ENCODE measurements at regions of chr10 and their contacts with region 1.

Region 1: GRCh38 chr10:67520924-67521520 is 175.0 kb downstream of the CTNNA3 start:
- DNase-seq: peak; percentile 94
- ATAC-seq: peak; percentile 85
- H3K4me3 ChIP-seq: no peak overlapping the region
- H3K27ac ChIP-seq: no peak overlapping the region
- H3K4me1 ChIP-seq: peaks cover 17% of the 10 kb centered on the region
- H3K27me3 ChIP-seq: peaks cover 18% of the 10 kb centered on the region
- CTCF ChIP-seq: peak; percentile 100

Region 2: GRCh38 chr10:66513504-66513903 is 1007.5 kb before region 1 on chr10:
- CTCF ChIA-PET with region 1: no interaction called
- POLR2A ChIA-PET with region 1: no interaction called
- intact Hi-C with region 1: loop called (anchors 10 kb)
- DNase-seq: no peak
- ATAC-seq: no peak
- H3K4me3 ChIP-seq: no peak overlapping the region
- H3K27ac ChIP-seq: no peak overlapping the region
- H3K4me1 ChIP-seq: peaks cover 20% of the 10 kb centered on the region
- H3K27me3 ChIP-seq: no peaks in the 10 kb centered on the region
- CTCF ChIP-seq: no peak

Region 3: GRCh38 chr10:66931340-66931948 is 589.6 kb before region 1 on chr10:
- CTCF ChIA-PET with region 1: interaction called, 9 read pairs
- POLR2A ChIA-PET with region 1: no interaction called
- intact Hi-C with region 1: loop called (anchors 1 kb)
- DNase-seq: peak; percentile 97
- ATAC-seq: peak; percentile 78
- H3K4me3 ChIP-seq: no peak overlapping the region
- H3K27ac ChIP-seq: no peak overlapping the region
- H3K4me1 ChIP-seq: peaks cover 3% of the 10 kb centered on the region; the same call in 1 of the 2 replicates
- H3K27me3 ChIP-seq: peaks cover 33% of the 10 kb centered on the region
- CTCF ChIP-seq: peak; percentile 100

Region 4: GRCh38 chr10:67476201-67476600 is 44.8 kb before region 1 on chr10:
- CTCF ChIA-PET with region 1: interaction called, 4 read pairs
- POLR2A ChIA-PET with region 1: no interaction called
- intact Hi-C with region 1: loop called (anchors 1 kb)
- DNase-seq: peak; percentile 63
- ATAC-seq: peak; percentile 68
- H3K4me3 ChIP-seq: no peak overlapping the region
- H3K27ac ChIP-seq: no peak overlapping the region
- H3K4me1 ChIP-seq: no peaks in the 10 kb centered on the region
- H3K27me3 ChIP-seq: 0 out of 2 replicates have a peak, but pooled peaks cover 3% of the 10 kb centered on the region
- CTCF ChIP-seq: peak; percentile 79

Region 5: DNA sequence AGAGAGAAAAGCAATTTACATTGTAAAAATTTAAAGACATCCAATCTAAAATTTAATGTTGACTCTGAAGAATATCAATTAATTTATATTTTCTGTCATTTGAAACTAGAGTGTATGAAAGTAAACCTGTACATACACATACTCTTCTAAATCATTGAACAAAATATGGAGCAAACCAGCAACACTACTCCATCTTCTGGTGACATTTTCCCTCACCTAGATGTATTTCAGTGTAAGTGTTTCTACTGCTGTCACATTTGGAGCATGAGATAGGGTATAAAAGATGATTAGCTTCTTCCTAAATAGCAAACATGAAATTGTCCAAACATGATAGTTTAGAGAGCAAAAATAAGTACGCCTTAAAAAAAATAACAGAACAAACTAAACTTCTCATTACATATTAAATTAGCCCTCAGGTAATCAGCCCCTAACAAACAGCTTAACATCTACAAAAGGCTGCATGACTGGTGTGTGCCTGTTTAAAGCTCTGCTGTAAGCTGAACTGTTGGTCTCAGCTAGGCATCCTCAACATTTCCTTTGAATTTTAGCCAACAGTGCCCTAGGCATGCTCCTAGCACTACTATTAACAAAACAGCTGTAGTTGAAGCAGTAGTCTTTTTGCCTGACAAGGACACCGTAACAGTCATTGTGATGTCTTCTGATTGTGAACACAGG is 14.8 kb before region 1 on chr10:
- CTCF ChIA-PET with region 1: interaction called, 7 read pairs
- POLR2A ChIA-PET with region 1: no interaction called
- intact Hi-C with region 1: loop called (anchors 1 kb)
- DNase-seq: peak; percentile 50
- ATAC-seq: peak; percentile 44
- H3K4me3 ChIP-seq: no peak overlapping the region
- H3K27ac ChIP-seq: no peak overlapping the region
- H3K4me1 ChIP-seq: peaks cover 10% of the 10 kb centered on the region
- H3K27me3 ChIP-seq: no peaks in the 10 kb centered on the region
- CTCF ChIP-seq: peak; percentile 52; the same call in 1 of the 2 replicates

Region 6: DNA sequence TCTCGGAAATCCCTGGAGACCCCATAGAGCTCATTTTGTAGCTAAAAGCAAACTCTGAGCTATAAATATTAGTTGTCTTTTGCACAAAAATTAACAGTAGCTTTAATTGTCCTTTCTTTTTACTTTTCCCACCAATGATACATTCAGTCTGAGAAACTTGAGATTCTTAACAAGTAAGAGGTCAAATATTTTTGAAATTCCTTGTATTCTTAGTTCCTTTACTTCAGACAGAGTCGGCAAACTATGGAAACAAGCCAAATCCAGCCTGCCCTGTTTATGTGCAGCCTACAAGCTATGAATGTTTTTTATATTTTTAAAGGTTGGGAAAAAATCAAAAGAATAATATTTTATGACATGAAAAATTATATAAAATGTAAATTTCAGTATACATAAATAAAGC is 28.4 kb after region 1 on chr10:
- CTCF ChIA-PET with region 1: no interaction called
- POLR2A ChIA-PET with region 1: no interaction called
- intact Hi-C with region 1: no loop called
- DNase-seq: no peak
- ATAC-seq: no peak
- H3K4me3 ChIP-seq: no peak overlapping the region
- H3K27ac ChIP-seq: no peak overlapping the region
- H3K4me1 ChIP-seq: no peaks in the 10 kb centered on the region
- H3K27me3 ChIP-seq: peaks cover 79% of the 10 kb centered on the region
- CTCF ChIP-seq: no peak

Region 7: DNA sequence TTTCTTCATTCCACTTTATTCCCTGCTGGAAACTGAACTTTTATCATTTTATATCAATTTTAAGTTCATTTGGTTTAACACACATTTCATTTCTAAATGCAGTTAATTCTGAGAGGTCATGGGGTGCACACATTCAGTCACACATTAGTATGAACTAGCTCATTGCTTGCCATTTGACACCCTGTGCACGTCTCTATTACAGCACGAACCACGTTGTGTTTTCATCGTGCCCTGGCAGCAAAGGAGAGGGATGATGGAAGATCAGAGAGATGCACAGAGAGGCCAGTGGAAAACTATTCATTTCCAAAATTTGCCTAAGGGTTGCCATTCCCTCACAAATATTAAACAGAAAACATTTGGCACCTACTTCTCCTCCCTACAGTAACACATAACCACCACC is 129.5 kb after region 1 on chr10:
- CTCF ChIA-PET with region 1: no interaction called
- POLR2A ChIA-PET with region 1: no interaction called
- intact Hi-C with region 1: no loop called
- DNase-seq: no peak
- ATAC-seq: no peak
- H3K4me3 ChIP-seq: no peak overlapping the region
- H3K27ac ChIP-seq: no peak overlapping the region
- H3K4me1 ChIP-seq: no peaks in the 10 kb centered on the region
- H3K27me3 ChIP-seq: peaks cover 50% of the 10 kb centered on the region
- CTCF ChIP-seq: no peak

Measured in PC-3 (cell line).